ENCODE measurements at regions of chr5 and their contacts with region 1.

Region 1: GRCh38 chr5:43066799-43067741 is 27.0 kb upstream of the ANXA2R start:
- DNase-seq: peak; percentile 88 to 91 (median 89)
- H3K4me3 ChIP-seq: peak overlapping the region; percentile 79 to 93 (median 85)
- H3K4me3 Mint-ChIP-seq: peak overlapping the region; percentile 94 to 98
- H3K27ac ChIP-seq: peak overlapping the region; percentile 98 to 99
- H3K27ac Mint-ChIP-seq: peak overlapping the region; percentile 97 to 99 (median 99)
- H3K4me1 ChIP-seq: peaks cover 33 to 40% of the 10 kb centered on the region in 2 donors
- H3K4me1 Mint-ChIP-seq: peaks cover 41% of the 10 kb centered on the region
- H3K27me3 ChIP-seq: no peaks in the 10 kb centered on the region
- H3K27me3 Mint-ChIP-seq: no peaks in the 10 kb centered on the region
- CTCF ChIP-seq: no peak

Region 2: DNA sequence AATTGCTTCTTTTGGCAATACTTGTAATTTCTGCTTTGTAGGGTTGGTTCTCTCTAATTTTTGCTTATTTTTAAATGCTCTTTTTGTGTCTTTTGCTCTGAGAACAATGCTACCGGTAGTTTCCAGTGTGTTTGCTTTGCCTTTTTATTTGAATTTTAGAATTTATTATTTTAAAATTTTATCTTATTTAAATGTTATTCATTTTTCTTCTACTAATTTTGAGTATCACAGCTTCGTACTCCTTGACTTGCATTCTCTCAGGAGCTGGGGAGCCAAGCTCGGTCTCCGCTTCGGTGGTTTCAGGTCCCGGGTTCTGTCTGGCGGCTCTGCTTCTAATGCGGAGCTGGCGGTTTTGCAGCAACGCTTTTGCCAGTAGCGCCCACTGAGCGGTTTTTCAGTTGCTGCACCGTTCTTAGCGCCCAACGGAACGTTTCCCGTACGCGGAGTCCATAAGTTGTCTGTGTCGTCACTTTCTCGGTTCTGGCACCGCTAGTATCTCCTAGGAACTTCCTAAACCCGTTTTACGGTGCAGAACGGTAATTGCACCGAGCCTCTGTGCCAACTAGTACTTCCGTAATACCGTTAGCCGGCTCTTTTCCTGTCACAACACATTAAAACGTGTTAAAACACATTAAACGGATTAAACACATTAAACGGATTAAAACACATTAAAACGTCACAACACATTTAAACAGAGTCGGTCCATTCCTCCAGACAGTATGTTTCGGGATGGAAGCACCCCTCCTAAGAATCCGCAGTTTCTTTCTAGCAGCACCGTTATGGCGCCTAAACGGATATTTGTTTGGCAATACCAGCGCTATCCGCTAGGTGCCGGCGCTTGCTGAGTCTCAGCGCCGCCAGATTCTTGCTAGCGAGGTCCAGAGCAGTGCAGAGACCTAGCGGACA is 72.6 kb before region 1 on chr5:
- intact Hi-C with region 1: loop called (anchors 1 kb)
- DNase-seq: peak; percentile 90 to 96 (median 92)
- H3K4me3 ChIP-seq: peak overlapping the region; percentile 79 to 88 (median 85)
- H3K4me3 Mint-ChIP-seq: peak overlapping the region; percentile 96 to 100
- H3K27ac ChIP-seq: peak overlapping the region; percentile 97 to 99
- H3K27ac Mint-ChIP-seq: peak overlapping the region; percentile 100
- H3K4me1 ChIP-seq: peaks cover 22 to 29% of the 10 kb centered on the region in 2 donors
- H3K4me1 Mint-ChIP-seq: peaks cover 28% of the 10 kb centered on the region
- H3K27me3 ChIP-seq: peaks cover under 1 to 5% of the 10 kb centered on the region in 2 donors
- H3K27me3 Mint-ChIP-seq: peaks cover 9 to 11% (median 9%) of the 10 kb centered on the region in 3 donors
- CTCF ChIP-seq: peak; percentile 88

Region 3: GRCh38 chr5:43040287-43041098 is 26.6 kb before region 1 on chr5 and contains the start of gene ANXA2R:
- intact Hi-C with region 1: loop called (anchors 1 to 2 kb)
- DNase-seq: peak; percentile 90 to 96 (median 92)
- H3K4me3 ChIP-seq: peak within 1 kb of the TSS; percentile 67 to 81 (median 70)
- H3K4me3 Mint-ChIP-seq: peak within 1 kb of the TSS; percentile 90 to 95
- H3K27ac ChIP-seq: peak within 1 kb of the TSS; percentile 100
- H3K27ac Mint-ChIP-seq: peak within 1 kb of the TSS; percentile 97 to 100 (median 98)
- H3K4me1 ChIP-seq: peaks cover 36 to 43% of the 10 kb centered on the region in 2 donors
- H3K4me1 Mint-ChIP-seq: peaks cover 47% of the 10 kb centered on the region
- H3K27me3 ChIP-seq: no peaks in the 10 kb centered on the region
- H3K27me3 Mint-ChIP-seq: no peaks in the 10 kb centered on the region
- CTCF ChIP-seq: peak; percentile 87
- polyA plus RNA-seq, gene ANXA2R: 2.3 to 6.4 (median 3.1) TPM

Region 4: DNA sequence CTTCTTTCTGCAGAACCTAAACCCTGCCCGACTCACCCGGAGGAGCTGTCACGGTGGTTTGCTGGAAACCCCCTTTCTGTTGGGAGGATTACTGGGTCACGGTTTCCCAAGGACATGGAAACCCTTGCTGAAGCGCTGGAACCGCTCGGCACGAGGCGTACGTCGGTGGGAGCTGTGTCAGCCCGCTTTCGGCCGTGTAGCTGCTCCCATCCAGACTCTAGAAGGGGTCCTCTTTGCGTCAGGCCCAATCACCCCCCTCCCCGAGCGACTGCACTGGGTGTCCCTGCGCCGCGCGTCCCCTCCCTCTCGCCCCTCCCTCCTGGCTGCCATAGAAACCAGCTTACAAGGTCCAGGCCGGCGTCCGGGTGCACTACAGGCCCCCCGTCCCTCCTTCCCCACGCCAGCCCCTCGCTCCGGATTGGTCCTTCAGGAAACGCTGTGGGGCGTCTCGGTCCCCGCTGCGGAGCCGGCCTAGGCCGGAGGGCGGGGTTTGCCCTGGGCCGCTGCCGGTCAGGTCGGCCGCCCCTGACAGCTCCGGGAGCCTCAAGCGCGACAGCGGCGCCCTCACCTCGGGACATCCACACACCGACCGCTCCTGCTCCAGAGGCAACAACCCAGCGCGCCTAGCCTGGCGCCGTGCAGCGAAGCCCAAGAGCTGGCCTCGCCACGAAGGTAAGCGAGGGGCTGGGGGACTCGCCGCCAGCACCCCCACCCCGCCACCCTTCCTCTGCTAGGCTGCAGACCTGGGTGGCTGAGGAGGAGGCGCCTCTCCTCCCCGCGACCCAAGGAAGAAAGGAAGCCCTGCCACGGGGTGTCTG is 124.9 kb after region 1 on chr5 and contains the start of gene NIM1K:
- intact Hi-C with region 1: loop called in 1 of 2 experiments (anchors 10 kb)
- DNase-seq: peak; percentile 38 to 80 (median 52)
- H3K4me3 ChIP-seq: peak within 1 kb of the TSS; percentile 21 to 64 (median 25)
- H3K4me3 Mint-ChIP-seq: peak within 1 kb of the TSS; percentile 82 to 90
- H3K27ac ChIP-seq: peak within 1 kb of the TSS in 1 of 2 donors; percentile 40
- H3K27ac Mint-ChIP-seq: peak within 1 kb of the TSS; percentile 57 to 89 (median 84)
- H3K4me1 ChIP-seq: peaks cover 24 to 29% of the 10 kb centered on the region in 2 donors
- H3K4me1 Mint-ChIP-seq: peaks cover 28% of the 10 kb centered on the region
- H3K27me3 ChIP-seq: peaks cover 25 to 33% of the 10 kb centered on the region in 2 donors
- H3K27me3 Mint-ChIP-seq: peaks cover 35 to 47% (median 42%) of the 10 kb centered on the region in 3 donors
- CTCF ChIP-seq: no peak
- polyA plus RNA-seq, gene NIM1K: 0.13 TPM in 1 of 3 donors, not detected in the others

Region 5: GRCh38 chr5:43484106-43484849 is 417.2 kb after region 1 on chr5:
- intact Hi-C with region 1: loop called in 1 of 2 experiments (anchors 5 kb)
- DNase-seq: peak; percentile 75 to 82 (median 79)
- H3K4me3 ChIP-seq: peak overlapping the region; percentile 57 to 83 (median 62)
- H3K4me3 Mint-ChIP-seq: peak overlapping the region; percentile 97 to 98
- H3K27ac ChIP-seq: peak overlapping the region; percentile 89 to 97
- H3K27ac Mint-ChIP-seq: peak overlapping the region; percentile 95 to 100 (median 99)
- H3K4me1 ChIP-seq: peaks cover 17 to 27% of the 10 kb centered on the region in 2 donors
- H3K4me1 Mint-ChIP-seq: peaks cover 27% of the 10 kb centered on the region
- H3K27me3 ChIP-seq: no peaks in the 10 kb centered on the region
- H3K27me3 Mint-ChIP-seq: peaks cover 0 to 2% (median 0%) of the 10 kb centered on the region in 3 donors
- CTCF ChIP-seq: peak; percentile 89

Measured in CD14-positive monocyte (primary cell).